Mammary epithelial cell (primary cell): ENCODE measurements at regions of chr20 and their contacts with region 1.

Region 1: GRCh38 chr20:49252556-49253350 is 25.1 kb downstream of the ZNFX1 start:
- DNase-seq: no peak
- H3K4me3 ChIP-seq: no peak overlapping the region
- H3K27ac ChIP-seq: no peak overlapping the region
- H3K4me1 ChIP-seq: peaks cover 11% of the 10 kb centered on the region
- H3K27me3 ChIP-seq: no peaks in the 10 kb centered on the region
- CTCF ChIP-seq: no peak

Region 2: DNA sequence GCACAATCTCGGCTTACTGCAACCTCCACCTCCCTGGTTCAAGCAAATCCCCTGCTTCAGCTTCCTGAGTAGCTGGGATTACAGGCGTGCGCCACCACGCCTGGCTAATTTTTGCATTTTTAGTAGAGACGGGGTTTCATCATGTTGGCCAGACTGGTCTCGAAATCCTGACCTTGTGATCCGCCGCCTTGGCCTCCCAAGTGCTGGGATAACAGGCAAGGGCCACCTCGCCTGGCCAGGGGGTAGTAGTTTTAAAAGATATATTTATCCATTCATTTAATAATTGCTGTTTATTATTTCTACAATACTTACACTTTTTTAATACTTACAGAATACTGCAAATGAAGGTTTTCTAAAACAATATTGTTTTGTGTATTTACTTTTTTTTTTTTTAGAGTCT is 49.0 kb before region 1 on chr20:
- CTCF ChIA-PET with region 1: no interaction called
- dilution Hi-C with region 1: loop called (anchors 5 kb)
- in situ Hi-C with region 1: no loop called
- intact Hi-C with region 1: no loop called
- DNase-seq: no peak
- H3K4me3 ChIP-seq: no peak overlapping the region
- H3K27ac ChIP-seq: no peak overlapping the region
- H3K4me1 ChIP-seq: no peaks in the 10 kb centered on the region
- H3K27me3 ChIP-seq: no peaks in the 10 kb centered on the region
- CTCF ChIP-seq: no peak